B cell (primary cell): ENCODE measurements at regions of chr1 and their contacts with region 1.

Region 1: GRCh38 chr1:211514030-211514754 is 22.2 kb upstream of the RD3 start:
- DNase-seq: peak; percentile 79
- ATAC-seq: peak; percentile 74
- H3K4me3 ChIP-seq: peak overlapping the region in 1 of 5 experiments; percentile 28
- H3K4me3 Mint-ChIP-seq: peak overlapping the region; percentile 86
- H3K27ac ChIP-seq: no peak overlapping the region
- H3K27ac Mint-ChIP-seq: peak overlapping the region; percentile 77
- H3K4me1 ChIP-seq: peaks cover 27 to 44% of the 10 kb centered on the region in 2 donors
- H3K4me1 Mint-ChIP-seq: peaks cover 40% of the 10 kb centered on the region
- H3K27me3 ChIP-seq: peaks cover 0 to 9% (median 3%) of the 10 kb centered on the region in 4 experiments
- H3K27me3 Mint-ChIP-seq: peaks cover 11% of the 10 kb centered on the region
- CTCF ChIP-seq: peak; percentile 81

Region 2: GRCh38 chr1:211258756-211259637 is 255.2 kb before region 1 on chr1 and contains the start of gene RCOR3:
- CTCF ChIA-PET with region 1: interaction called, 3 read pairs
- POLR2A ChIA-PET with region 1: interaction called, 6 read pairs
- intact Hi-C with region 1: loop called (anchors 1 kb)
- DNase-seq: peak; percentile 93
- ATAC-seq: peak; percentile 74
- H3K4me3 ChIP-seq: peak within 1 kb of the TSS; percentile 81 to 93 (median 90)
- H3K4me3 Mint-ChIP-seq: peak within 1 kb of the TSS; percentile 92
- H3K27ac ChIP-seq: peak within 1 kb of the TSS; percentile 88 to 90
- H3K27ac Mint-ChIP-seq: peak within 1 kb of the TSS; percentile 96
- H3K4me1 ChIP-seq: peaks cover 11 to 16% of the 10 kb centered on the region in 2 donors
- H3K4me1 Mint-ChIP-seq: peaks cover 15% of the 10 kb centered on the region
- H3K27me3 ChIP-seq: no peaks in the 10 kb centered on the region
- H3K27me3 Mint-ChIP-seq: no peaks in the 10 kb centered on the region
- CTCF ChIP-seq: peak; percentile 84
- total RNA-seq, gene RCOR3: 120 and 124 TPM in 2 replicates

Region 3: DNA sequence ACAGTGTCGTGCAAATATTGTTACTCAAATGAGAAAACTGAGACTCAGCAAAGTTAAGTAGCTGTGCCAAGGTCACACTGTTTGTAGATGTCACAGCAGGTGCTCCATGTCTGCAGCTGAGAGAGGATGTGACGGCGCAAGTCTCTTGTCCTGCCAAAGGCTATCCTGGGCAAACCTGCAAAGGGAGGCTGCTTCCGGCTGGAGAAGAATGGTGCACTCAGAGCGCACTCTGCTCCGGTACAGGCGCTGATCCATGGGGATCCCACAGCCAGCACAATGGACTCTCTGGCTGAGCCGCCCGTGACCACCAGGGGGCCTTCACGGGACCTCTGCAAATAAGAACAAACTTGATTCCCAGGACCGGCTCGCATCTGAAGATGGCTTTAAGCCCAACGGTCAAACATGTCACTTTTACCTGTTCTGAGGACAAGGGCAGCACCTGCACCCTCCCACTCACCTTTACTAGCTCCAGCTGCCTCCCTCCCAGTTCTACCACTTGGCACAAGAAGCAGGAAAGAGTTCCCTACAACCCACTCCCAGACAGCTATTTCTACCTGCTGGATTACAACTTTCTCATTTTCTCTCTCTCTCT is 44.2 kb before region 1 on chr1:
- CTCF ChIA-PET with region 1: interaction called, 11 read pairs
- POLR2A ChIA-PET with region 1: no interaction called
- intact Hi-C with region 1: loop called (anchors 1 kb)
- DNase-seq: peak; percentile 47
- ATAC-seq: no peak
- H3K4me3 ChIP-seq: no peak overlapping the region
- H3K4me3 Mint-ChIP-seq: no peak overlapping the region
- H3K27ac ChIP-seq: no peak overlapping the region
- H3K27ac Mint-ChIP-seq: no peak overlapping the region
- H3K4me1 ChIP-seq: peaks cover 0 to 4% of the 10 kb centered on the region in 2 donors
- H3K4me1 Mint-ChIP-seq: peaks cover 5% of the 10 kb centered on the region
- H3K27me3 ChIP-seq: peaks cover 0 to 3% (median 2%) of the 10 kb centered on the region in 4 experiments
- H3K27me3 Mint-ChIP-seq: peaks cover 5% of the 10 kb centered on the region
- CTCF ChIP-seq: peak; percentile 71

Region 4: DNA sequence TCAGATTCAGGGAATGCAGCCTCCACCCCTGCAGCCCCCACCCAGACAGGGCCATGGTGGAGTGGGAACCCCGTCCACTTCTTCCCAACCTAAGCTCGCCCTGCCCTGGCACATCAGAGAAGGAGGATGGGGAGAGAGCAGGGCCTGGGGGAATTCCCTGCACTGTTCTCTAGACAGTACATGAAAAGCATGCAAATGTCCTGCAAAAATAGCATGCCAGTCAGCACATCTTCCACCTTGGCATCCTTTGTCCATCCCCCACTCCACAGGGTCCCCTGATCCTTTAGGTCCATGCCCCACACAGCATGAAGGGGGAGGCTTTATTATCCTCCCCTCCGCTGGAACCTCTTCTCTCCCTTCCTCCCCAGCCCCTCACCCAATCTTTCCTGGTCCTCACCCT is 12.8 kb after region 1 on chr1:
- CTCF ChIA-PET with region 1: interaction called, 13 read pairs
- POLR2A ChIA-PET with region 1: no interaction called
- intact Hi-C with region 1: no loop called
- DNase-seq: no peak
- ATAC-seq: no peak
- H3K4me3 ChIP-seq: no peak overlapping the region
- H3K4me3 Mint-ChIP-seq: no peak overlapping the region
- H3K27ac ChIP-seq: no peak overlapping the region
- H3K27ac Mint-ChIP-seq: no peak overlapping the region
- H3K4me1 ChIP-seq: peaks cover 13 to 20% of the 10 kb centered on the region in 2 donors
- H3K4me1 Mint-ChIP-seq: peaks cover 17% of the 10 kb centered on the region
- H3K27me3 ChIP-seq: no peaks in the 10 kb centered on the region
- H3K27me3 Mint-ChIP-seq: peaks cover 6% of the 10 kb centered on the region
- CTCF ChIP-seq: no peak

Region 5: GRCh38 chr1:211654838-211655787 is 140.9 kb after region 1 on chr1:
- CTCF ChIA-PET with region 1: interaction called, 27 read pairs
- POLR2A ChIA-PET with region 1: no interaction called
- intact Hi-C with region 1: loop called (anchors 1 kb)
- DNase-seq: peak; percentile 85
- ATAC-seq: peak; percentile 91
- H3K4me3 ChIP-seq: no peak overlapping the region
- H3K4me3 Mint-ChIP-seq: no peak overlapping the region
- H3K27ac ChIP-seq: no peak overlapping the region
- H3K27ac Mint-ChIP-seq: no peak overlapping the region
- H3K4me1 ChIP-seq: peaks cover 0 to 7% of the 10 kb centered on the region in 2 donors
- H3K4me1 Mint-ChIP-seq: no peaks in the 10 kb centered on the region
- H3K27me3 ChIP-seq: peaks cover 0 to 6% (median 1%) of the 10 kb centered on the region in 4 experiments
- H3K27me3 Mint-ChIP-seq: peaks cover 9% of the 10 kb centered on the region
- CTCF ChIP-seq: peak; percentile 94

Region 6: GRCh38 chr1:211830330-211831142 is 316.3 kb after region 1 on chr1 and contains the start of gene LPGAT1:
- CTCF ChIA-PET with region 1: no interaction called
- POLR2A ChIA-PET with region 1: no interaction called
- intact Hi-C with region 1: loop called (anchors 2 kb)
- DNase-seq: peak; percentile 86
- ATAC-seq: peak; percentile 85
- H3K4me3 ChIP-seq: peak within 1 kb of the TSS; percentile 48 to 85 (median 72)
- H3K4me3 Mint-ChIP-seq: peak within 1 kb of the TSS; percentile 94
- H3K27ac ChIP-seq: peak within 1 kb of the TSS; percentile 39 to 80
- H3K27ac Mint-ChIP-seq: peak within 1 kb of the TSS; percentile 91
- H3K4me1 ChIP-seq: peaks cover 44 to 49% of the 10 kb centered on the region in 2 donors
- H3K4me1 Mint-ChIP-seq: peaks cover 58% of the 10 kb centered on the region
- H3K27me3 ChIP-seq: no peaks in the 10 kb centered on the region
- H3K27me3 Mint-ChIP-seq: no peaks in the 10 kb centered on the region
- CTCF ChIP-seq: peak; percentile 76
- total RNA-seq, gene LPGAT1: 60.1 and 63.8 TPM in 2 replicates